ENCODE measurements at regions of chr21 and their contacts with region 1.

Region 1: GRCh38 chr21:37563641-37564340 is 197.2 kb downstream of the DYRK1A start:
- DNase-seq: peak; percentile 96
- ATAC-seq: peak; percentile 79
- H3K4me3 Mint-ChIP-seq: peak overlapping the region; percentile 88
- H3K27ac Mint-ChIP-seq: peak overlapping the region; percentile 100
- H3K4me1 Mint-ChIP-seq: peaks cover 23% of the 10 kb centered on the region
- H3K27me3 Mint-ChIP-seq: no peaks in the 10 kb centered on the region

Region 2: GRCh38 chr21:36966066-36966820 is 597.5 kb before region 1 on chr21 and contains the start of gene HLCS:
- CTCF ChIA-PET with region 1: no interaction called
- POLR2A ChIA-PET with region 1: no interaction called
- intact Hi-C with region 1: loop called in 1 of 2 experiments (anchors 5 kb)
- DNase-seq: peak; percentile 84
- ATAC-seq: peak; percentile 90
- H3K4me3 Mint-ChIP-seq: peak within 1 kb of the TSS; percentile 73
- H3K27ac Mint-ChIP-seq: peak within 1 kb of the TSS; percentile 88
- H3K4me1 Mint-ChIP-seq: peaks cover 9% of the 10 kb centered on the region
- H3K27me3 Mint-ChIP-seq: no peaks in the 10 kb centered on the region
- total RNA-seq, gene HLCS: 14.3 to 15.0 TPM

Region 3: DNA sequence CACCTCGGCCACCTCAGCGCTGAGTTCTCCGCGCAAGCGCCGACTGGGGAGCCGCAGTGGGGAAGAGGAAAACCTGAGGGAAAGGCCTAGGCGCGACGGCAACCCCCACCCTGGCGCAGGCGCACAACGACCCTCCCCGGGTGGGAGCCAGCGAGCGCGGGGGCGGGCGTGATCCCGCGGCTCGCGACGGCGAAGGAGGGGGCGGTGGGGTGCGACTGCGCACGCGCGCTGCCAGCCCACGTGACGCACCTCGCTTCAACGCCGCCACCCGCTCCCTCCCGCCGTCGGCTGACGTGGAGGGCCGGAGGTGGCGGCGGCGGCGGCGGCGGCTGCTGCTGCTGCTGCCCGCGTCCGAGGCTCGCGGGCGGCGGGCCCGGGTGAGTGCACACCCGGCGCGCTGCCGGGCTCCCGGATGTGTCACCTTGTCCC is 490.8 kb before region 1 on chr21 and contains the starts of genes PIGP and TTC3:
- CTCF ChIA-PET with region 1: no interaction called
- POLR2A ChIA-PET with region 1: no interaction called
- intact Hi-C with region 1: loop called in 1 of 2 experiments (anchors 1 kb)
- DNase-seq: peak; percentile 97
- ATAC-seq: peak; percentile 74
- H3K4me3 Mint-ChIP-seq: peak within 1 kb of the TSS; percentile 99
- H3K27ac Mint-ChIP-seq: peak within 1 kb of the TSS; percentile 92
- H3K4me1 Mint-ChIP-seq: peaks cover 48% of the 10 kb centered on the region
- H3K27me3 Mint-ChIP-seq: no peaks in the 10 kb centered on the region
- total RNA-seq, gene PIGP: 32.8 to 41.0 TPM
- total RNA-seq, gene TTC3: 65.1 to 78.9 TPM

Region 4: DNA sequence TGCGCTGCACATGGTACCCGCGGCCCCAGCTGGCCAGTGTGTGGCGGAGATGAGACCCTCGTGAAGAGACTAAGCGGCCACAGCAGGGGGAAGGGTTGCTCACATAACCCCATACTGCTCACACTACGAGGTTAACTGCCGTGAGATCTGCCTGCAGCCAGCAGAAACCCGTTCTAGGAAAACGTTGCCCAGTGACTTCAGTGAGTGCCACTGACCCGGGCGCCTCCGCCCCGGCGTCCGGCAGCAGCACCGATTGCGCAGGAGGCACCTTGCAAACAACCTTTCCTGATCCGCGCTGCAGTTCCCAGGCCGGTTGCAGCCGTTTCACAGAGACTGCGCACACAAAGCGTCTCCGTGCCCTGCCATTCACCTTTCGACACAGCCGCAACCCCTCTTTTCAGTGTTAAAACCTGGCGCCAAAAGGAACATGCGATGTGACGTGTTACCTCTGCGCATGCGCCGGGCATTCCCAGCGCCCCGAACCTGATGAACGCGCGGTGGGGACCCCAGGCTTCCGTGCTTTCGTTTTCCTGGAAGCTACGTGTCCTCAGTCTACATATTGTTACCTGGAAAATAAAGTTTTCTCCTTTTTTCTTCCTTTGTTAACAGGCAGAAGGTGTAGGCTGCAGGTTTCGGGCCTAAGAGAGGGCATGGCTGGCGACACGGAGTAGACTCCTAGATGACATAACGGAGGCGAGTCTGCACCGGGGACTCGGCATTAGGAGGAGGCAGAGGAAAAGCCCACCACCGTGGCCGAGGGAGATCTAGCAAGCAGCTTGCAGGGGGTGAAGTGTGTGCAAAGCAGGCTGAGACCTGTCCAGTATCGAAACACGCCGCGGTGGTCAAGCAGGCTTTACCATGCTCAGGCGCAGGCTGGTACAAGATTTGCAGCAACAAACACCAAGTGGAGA is 305.6 kb before region 1 on chr21:
- CTCF ChIA-PET with region 1: interaction called, 5 read pairs
- POLR2A ChIA-PET with region 1: interaction called, 3 read pairs
- intact Hi-C with region 1: loop called in 1 of 2 experiments (anchors 1 kb)
- DNase-seq: peak; percentile 92
- ATAC-seq: peak; percentile 87
- H3K4me3 Mint-ChIP-seq: peak overlapping the region; percentile 79
- H3K27ac Mint-ChIP-seq: peak overlapping the region; percentile 93
- H3K4me1 Mint-ChIP-seq: peaks cover 31% of the 10 kb centered on the region
- H3K27me3 Mint-ChIP-seq: no peaks in the 10 kb centered on the region

Region 5: DNA sequence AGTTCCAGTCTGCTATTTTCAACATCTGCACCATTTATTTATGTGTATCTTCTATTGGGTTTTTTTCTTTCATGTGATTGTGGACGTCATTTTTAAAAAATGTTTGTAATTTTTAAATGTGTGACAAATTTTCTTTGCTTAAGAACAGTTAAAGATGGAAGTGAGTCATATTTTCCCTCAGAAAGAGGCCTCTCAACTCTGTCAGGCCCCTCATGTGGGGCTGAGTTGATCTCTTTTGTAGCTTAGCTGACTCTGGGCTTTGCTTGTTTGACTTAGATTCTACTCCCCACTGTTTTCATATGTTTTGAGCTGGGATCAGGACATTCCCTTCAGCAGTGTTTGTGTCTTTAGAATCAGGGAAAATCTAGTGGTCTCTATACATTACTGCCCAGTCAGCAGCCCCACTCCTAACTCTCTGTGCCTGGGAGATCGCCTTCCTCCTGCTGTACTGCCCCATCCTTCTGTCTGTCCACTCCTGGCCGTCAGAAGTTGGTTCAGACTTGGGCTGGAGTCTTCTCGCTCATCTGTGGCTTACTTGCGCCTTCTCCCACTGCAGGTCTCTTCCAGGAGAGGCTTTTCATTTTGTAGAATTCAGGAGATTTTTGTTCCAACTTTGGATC is 59.8 kb before region 1 on chr21:
- CTCF ChIA-PET with region 1: no interaction called
- POLR2A ChIA-PET with region 1: no interaction called
- intact Hi-C with region 1: loop called in 1 of 2 experiments (anchors 1 kb)
- DNase-seq: peak; percentile 47
- ATAC-seq: peak; percentile 93
- H3K4me3 Mint-ChIP-seq: peak overlapping the region; percentile 25
- H3K27ac Mint-ChIP-seq: peak overlapping the region; percentile 89
- H3K4me1 Mint-ChIP-seq: peaks cover 27% of the 10 kb centered on the region
- H3K27me3 Mint-ChIP-seq: no peaks in the 10 kb centered on the region

Region 6: GRCh38 chr21:38244885-38245545 is 681.2 kb after region 1 on chr21:
- CTCF ChIA-PET with region 1: no interaction called
- POLR2A ChIA-PET with region 1: no interaction called
- intact Hi-C with region 1: loop called in 1 of 2 experiments (anchors 1 kb)
- DNase-seq: peak; percentile 84
- ATAC-seq: peak; percentile 94
- H3K4me3 Mint-ChIP-seq: peak overlapping the region; percentile 48
- H3K27ac Mint-ChIP-seq: peak overlapping the region; percentile 86
- H3K4me1 Mint-ChIP-seq: peaks cover 38% of the 10 kb centered on the region
- H3K27me3 Mint-ChIP-seq: peaks cover 15% of the 10 kb centered on the region